ENCODE measurements at regions of chr1 and their contacts with region 1.

Region 1: DNA sequence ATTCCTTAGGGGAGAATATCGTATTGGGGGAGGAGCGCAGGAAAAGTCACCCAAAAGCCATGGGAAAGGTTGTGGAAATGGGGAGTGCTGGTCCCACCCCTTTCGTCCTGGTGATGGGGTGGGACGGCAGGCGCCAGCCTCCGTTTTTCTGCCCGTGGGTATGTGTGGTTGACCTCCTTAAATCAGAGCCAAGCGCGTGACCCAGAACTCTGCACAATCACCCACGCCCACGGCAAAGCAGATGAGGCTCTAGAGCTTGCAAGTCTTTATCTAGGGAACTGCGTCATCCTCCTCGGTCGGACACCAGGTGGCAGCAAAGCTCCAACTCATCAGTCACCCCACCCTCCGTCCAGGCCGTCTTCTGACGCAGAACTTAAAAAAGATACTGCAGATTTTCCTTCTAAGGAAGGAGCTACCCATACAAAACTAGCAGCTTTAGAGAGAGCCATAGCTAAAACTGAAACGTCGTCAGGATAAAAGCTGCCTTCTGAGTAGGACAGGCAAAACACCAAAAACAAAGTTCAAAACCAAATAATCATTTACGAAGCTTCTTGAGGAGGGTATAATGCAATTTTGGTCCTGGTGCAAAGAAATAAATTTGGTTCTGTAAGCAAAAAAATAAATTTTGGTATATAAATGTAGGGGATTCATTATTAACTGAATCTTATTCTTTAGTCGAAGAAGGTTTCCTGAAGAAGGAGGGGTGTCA is 62.0 kb downstream of the TBX19 start:
- DNase-seq: peak; percentile 76 to 96 (median 85)
- ATAC-seq: peak; percentile 98 to 99 (median 99)
- H3K4me3 ChIP-seq: no peak overlapping the region
- H3K4me3 Mint-ChIP-seq: peak overlapping the region in 2 of 3 donors; percentile 11 to 50
- H3K27ac ChIP-seq: peak overlapping the region; percentile 68
- H3K27ac Mint-ChIP-seq: peak overlapping the region; percentile 94
- H3K4me1 ChIP-seq: peaks cover 3 to 11% of the 10 kb centered on the region in 2 experiments
- H3K4me1 Mint-ChIP-seq: peaks cover 22 to 64% (median 33%) of the 10 kb centered on the region in 3 donors
- H3K27me3 ChIP-seq: no peaks in the 10 kb centered on the region
- H3K27me3 Mint-ChIP-seq: no peaks in the 10 kb centered on the region

Region 2: DNA sequence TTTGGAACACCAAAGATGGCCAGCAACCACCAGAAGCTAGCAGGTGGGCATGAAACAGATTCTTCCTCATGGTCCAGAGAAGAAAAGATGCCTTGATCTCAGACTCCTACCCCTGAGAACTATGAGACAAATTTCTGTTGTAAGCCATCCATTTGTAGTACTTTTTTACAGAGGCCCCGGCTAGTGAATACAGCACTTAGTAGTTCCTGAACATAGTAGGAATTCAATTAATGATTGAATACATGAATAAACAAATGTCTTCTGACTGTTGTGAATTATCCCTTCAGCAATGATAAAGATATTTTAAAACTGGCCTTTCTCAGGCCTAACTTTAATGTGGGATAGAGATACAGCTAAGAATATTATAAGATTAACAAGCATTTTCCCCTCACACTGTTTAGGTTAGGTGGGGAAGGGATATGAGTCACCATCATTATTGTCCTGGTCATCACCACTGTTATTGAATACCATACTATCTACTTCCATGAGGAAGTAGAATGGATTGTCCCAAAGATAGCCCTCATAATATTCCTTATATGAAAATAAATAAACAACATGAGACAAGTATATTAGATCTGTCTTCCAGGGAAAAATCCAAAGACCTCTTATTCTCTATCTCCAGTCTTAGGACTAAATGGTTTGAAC is 480.2 kb before region 1 on chr1:
- CTCF ChIA-PET with region 1: no interaction called
- POLR2A ChIA-PET with region 1: no interaction called
- DNase-seq: no peak
- ATAC-seq: no peak
- H3K4me3 ChIP-seq: no peak overlapping the region
- H3K4me3 Mint-ChIP-seq: no peak overlapping the region
- H3K27ac ChIP-seq: no peak overlapping the region
- H3K27ac Mint-ChIP-seq: no peak overlapping the region
- H3K4me1 ChIP-seq: no peaks in the 10 kb centered on the region
- H3K4me1 Mint-ChIP-seq: no peaks in the 10 kb centered on the region
- H3K27me3 ChIP-seq: peaks cover 0 to 5% of the 10 kb centered on the region in 2 experiments
- H3K27me3 Mint-ChIP-seq: peaks cover 0 to 2% of the 10 kb centered on the region in 2 donors

Region 3: DNA sequence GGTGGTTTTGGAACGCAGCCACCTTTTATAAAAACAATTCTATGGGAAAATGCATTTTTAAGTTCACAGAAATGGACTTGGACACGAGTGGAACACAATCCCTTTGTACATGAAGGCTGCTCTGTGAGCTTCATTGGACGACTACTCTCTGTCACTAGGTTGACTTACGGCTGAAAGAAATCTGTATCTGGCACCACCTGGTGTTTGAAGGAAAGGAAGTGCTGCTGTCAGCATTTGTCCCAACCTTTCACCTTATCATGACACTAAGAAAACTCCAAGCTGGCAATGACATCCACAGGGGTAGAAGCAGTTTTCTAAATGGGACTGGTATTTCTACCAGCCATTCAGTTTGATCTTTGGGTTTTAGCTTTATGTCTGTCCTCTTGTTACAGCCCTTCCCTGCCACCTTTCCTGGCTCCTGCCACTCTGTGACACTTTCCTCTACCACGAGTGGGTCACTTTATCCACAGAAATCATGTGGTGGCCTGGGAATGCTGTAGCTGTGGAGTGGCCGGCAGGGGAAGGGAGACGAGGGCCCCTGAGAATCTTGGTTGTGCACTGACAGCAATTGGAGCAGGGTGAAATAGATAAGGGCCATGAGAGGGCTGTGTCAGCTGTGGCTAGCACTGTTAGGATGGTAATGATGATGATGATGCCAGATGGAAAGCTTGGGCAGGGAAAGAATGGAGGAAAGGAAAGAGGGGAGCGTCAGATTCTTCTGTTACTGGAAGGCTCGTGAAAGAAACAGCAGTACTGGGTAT is 23.2 kb after region 1 on chr1:
- CTCF ChIA-PET with region 1: interaction called, 99 to 234 read pairs
- POLR2A ChIA-PET with region 1: interaction called in 1 of 2 experiments, 10 read pairs
- DNase-seq: peak in 3 of 35 experiments; percentile 10 to 58 (median 16)
- ATAC-seq: peak in 2 of 4 experiments; percentile 32 to 36
- H3K4me3 ChIP-seq: no peak overlapping the region
- H3K4me3 Mint-ChIP-seq: no peak overlapping the region
- H3K27ac ChIP-seq: no peak overlapping the region
- H3K27ac Mint-ChIP-seq: no peak overlapping the region
- H3K4me1 ChIP-seq: peaks cover 2 to 16% of the 10 kb centered on the region in 2 experiments
- H3K4me1 Mint-ChIP-seq: peaks cover 7 to 45% (median 32%) of the 10 kb centered on the region in 3 donors
- H3K27me3 ChIP-seq: no peaks in the 10 kb centered on the region
- H3K27me3 Mint-ChIP-seq: peaks cover 0 to 4% of the 10 kb centered on the region in 2 donors

Region 4: DNA sequence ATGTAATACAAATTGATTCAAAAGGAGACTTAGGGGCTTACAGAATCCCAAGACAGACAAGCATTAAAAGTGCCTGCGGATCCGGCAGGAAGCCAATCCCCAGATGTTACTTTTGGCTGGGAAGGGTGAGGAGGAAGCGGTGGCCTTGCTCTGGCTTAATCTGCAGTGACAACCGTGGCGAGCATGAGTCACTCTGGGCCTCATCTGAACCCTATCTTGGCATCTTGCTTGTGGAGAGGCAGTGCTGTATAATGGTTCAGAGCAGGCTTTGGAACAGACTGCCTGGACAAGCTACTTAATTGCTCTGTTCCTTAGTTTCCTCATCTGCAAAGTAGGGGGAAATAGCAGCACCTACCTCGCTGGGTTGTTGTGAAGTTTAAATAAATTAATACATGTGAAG is 127.0 kb after region 1 on chr1:
- CTCF ChIA-PET with region 1: interaction called in 1 of 2 experiments, 10 read pairs
- POLR2A ChIA-PET with region 1: interaction called in 1 of 2 experiments, 3 read pairs
- DNase-seq: peak in 6 of 35 experiments; percentile 5 to 38 (median 15)
- ATAC-seq: peak in 3 of 4 experiments; percentile 64 to 80 (median 68)
- H3K4me3 ChIP-seq: no peak overlapping the region
- H3K4me3 Mint-ChIP-seq: peak overlapping the region in 1 of 3 donors; percentile 20
- H3K27ac ChIP-seq: peak overlapping the region; percentile 35
- H3K27ac Mint-ChIP-seq: peak overlapping the region; percentile 73 to 79
- H3K4me1 ChIP-seq: peaks cover 29 to 34% of the 10 kb centered on the region in 2 experiments
- H3K4me1 Mint-ChIP-seq: peaks cover 65 to 68% (median 66%) of the 10 kb centered on the region in 3 donors
- H3K27me3 ChIP-seq: no peaks in the 10 kb centered on the region
- H3K27me3 Mint-ChIP-seq: no peaks in the 10 kb centered on the region

Region 5: GRCh38 chr1:169348383-169349036 is 1005.8 kb after region 1 on chr1:
- CTCF ChIA-PET with region 1: interaction called, 29 to 85 read pairs
- POLR2A ChIA-PET with region 1: interaction called in 1 of 2 experiments, 3 read pairs
- DNase-seq: peak in 8 of 35 experiments; percentile 5 to 81 (median 14)
- ATAC-seq: peak in 1 of 4 experiments; percentile 36
- H3K4me3 ChIP-seq: no peak overlapping the region
- H3K4me3 Mint-ChIP-seq: no peak overlapping the region
- H3K27ac ChIP-seq: no peak overlapping the region
- H3K27ac Mint-ChIP-seq: no peak overlapping the region
- H3K4me1 ChIP-seq: no peaks in the 10 kb centered on the region
- H3K4me1 Mint-ChIP-seq: peaks cover 0 to 11% (median 9%) of the 10 kb centered on the region in 3 donors
- H3K27me3 ChIP-seq: no peaks in the 10 kb centered on the region
- H3K27me3 Mint-ChIP-seq: no peaks in the 10 kb centered on the region

Region 6: GRCh38 chr1:169546087-169546995 is 1203.6 kb after region 1 on chr1:
- CTCF ChIA-PET with region 1: interaction called, 3 to 16 read pairs
- POLR2A ChIA-PET with region 1: interaction called in 1 of 2 experiments, 4 read pairs
- DNase-seq: peak in 32 of 35 experiments; percentile 13 to 86 (median 39)
- ATAC-seq: peak in 3 of 4 experiments; percentile 83 to 85 (median 83)
- H3K4me3 ChIP-seq: no peak overlapping the region
- H3K4me3 Mint-ChIP-seq: no peak overlapping the region
- H3K27ac ChIP-seq: no peak overlapping the region
- H3K27ac Mint-ChIP-seq: peak overlapping the region in 1 of 2 donors; percentile 8
- H3K4me1 ChIP-seq: no peaks in the 10 kb centered on the region
- H3K4me1 Mint-ChIP-seq: peaks cover 0 to 5% (median 0%) of the 10 kb centered on the region in 3 donors
- H3K27me3 ChIP-seq: no peaks in the 10 kb centered on the region
- H3K27me3 Mint-ChIP-seq: no peaks in the 10 kb centered on the region

Measured in T-cell (primary cell).